ENCODE measurements at regions of chr22 and their contacts with region 1.

Region 1: GRCh38 chr22:43273902-43274484 is 69.2 kb downstream of the SCUBE1 start:
- DNase-seq: peak; percentile 61 to 69
- ATAC-seq: peak; percentile 65 to 87; a peak in 5 of 6 replicates
- H3K4me3 ChIP-seq: no peak overlapping the region
- H3K27ac ChIP-seq: no peak overlapping the region
- H3K4me1 ChIP-seq: no peaks in the 10 kb centered on the region
- CTCF ChIP-seq: peak; percentile 60
- EP300 ChIP-seq: no peak
- POLR2A ChIP-seq: no peak
- RAD21 ChIP-seq: peak; percentile 80 to 89

Region 2: DNA sequence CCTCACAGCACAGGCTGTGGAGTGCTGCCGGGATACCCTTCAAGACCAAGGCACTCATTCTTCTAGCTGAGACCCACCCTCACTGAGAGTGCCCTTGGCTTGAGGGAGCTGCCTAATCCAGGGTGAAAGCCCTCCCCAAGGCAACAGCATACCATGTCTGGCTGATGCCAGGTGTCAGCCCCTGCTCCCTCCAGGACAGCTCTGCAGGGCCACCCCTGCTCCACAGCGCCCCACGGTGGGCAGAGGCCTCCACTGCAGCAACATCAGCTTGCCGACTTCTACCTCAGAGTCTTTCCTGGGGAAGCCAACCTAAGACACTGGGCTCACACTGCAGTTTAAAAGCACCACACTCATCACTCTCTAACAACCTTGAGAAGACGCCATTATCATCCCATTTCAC is 213.8 kb before region 1 on chr22:
- CTCF ChIA-PET with region 1: no interaction called
- POLR2A ChIA-PET with region 1: no interaction called
- DNase-seq: peak in 1 of 2 experiments; percentile 33
- ATAC-seq: peak; percentile 43 to 77; a peak in 4 of 6 replicates
- H3K4me3 ChIP-seq: no peak overlapping the region
- H3K27ac ChIP-seq: no peak overlapping the region
- H3K4me1 ChIP-seq: no peaks in the 10 kb centered on the region
- CTCF ChIP-seq: peak; percentile 31; the same call in 1 of the 3 replicates
- EP300 ChIP-seq: no peak
- POLR2A ChIP-seq: no peak
- RAD21 ChIP-seq: peak; percentile 32 to 54; a peak in 2 of 5 replicates

Region 3: DNA sequence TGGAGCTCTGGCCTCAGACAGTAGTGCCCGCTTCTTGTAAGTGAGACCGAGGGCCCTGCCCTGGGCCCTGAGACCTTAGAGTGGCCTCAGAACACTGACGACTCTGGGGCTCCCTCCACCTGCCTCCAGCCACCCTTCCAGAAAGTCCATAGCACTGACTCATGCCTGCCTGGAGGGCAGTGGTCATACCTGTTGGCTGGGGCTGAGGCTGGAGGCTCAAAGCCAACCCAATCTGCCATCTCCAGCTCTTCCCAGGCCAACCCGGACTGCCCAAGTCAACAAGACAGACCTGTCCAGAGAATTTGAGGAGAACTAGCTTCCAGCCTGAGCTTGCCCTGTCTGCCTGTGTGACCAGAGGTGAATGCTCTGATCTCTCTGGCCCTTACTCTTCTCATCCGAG is 20.2 kb before region 1 on chr22:
- CTCF ChIA-PET with region 1: interaction called, 32 read pairs
- POLR2A ChIA-PET with region 1: no interaction called
- DNase-seq: no peak
- ATAC-seq: no peak
- H3K4me3 ChIP-seq: no peak overlapping the region
- H3K27ac ChIP-seq: no peak overlapping the region
- H3K4me1 ChIP-seq: no peaks in the 10 kb centered on the region
- CTCF ChIP-seq: no peak
- EP300 ChIP-seq: no peak
- POLR2A ChIP-seq: no peak
- RAD21 ChIP-seq: no peak

Region 4: GRCh38 chr22:43293655-43294392 is 19.8 kb after region 1 on chr22:
- CTCF ChIA-PET with region 1: interaction called, 18 read pairs
- POLR2A ChIA-PET with region 1: no interaction called
- DNase-seq: peak; percentile 32 to 73
- ATAC-seq: peak; percentile 48 to 82; a peak in 5 of 6 replicates
- H3K4me3 ChIP-seq: no peak overlapping the region
- H3K27ac ChIP-seq: peak overlapping the region; percentile 45 to 52; a peak in 4 of 6 replicates
- H3K4me1 ChIP-seq: peaks cover 15% of the 10 kb centered on the region
- CTCF ChIP-seq: no peak
- EP300 ChIP-seq: no peak
- POLR2A ChIP-seq: no peak
- RAD21 ChIP-seq: no peak

Region 5: DNA sequence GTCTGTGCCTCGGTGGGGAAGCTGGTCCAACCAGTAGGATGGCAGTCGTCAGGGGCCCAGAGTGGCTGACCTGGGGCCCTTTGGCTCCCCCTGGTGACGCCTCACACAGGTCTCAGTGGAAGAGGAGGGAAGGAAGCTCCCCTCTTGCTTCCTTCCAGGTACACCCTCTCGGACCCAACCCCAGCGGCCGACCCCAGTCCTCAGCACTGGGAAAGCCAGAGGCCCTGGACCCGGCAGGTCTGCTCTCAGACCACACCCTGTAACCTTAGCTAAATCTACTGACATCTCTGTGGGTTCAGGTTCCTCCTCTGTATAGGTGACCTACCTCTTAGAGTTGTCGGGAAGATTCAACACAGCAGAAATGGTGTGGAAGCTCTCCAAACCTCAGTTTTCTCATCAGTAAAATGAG is 72.5 kb after region 1 on chr22:
- CTCF ChIA-PET with region 1: interaction called, 84 read pairs
- POLR2A ChIA-PET with region 1: no interaction called
- DNase-seq: peak; percentile 37 to 65
- ATAC-seq: peak; percentile 59 to 87; a peak in 4 of 6 replicates
- H3K4me3 ChIP-seq: no peak overlapping the region
- H3K27ac ChIP-seq: no peak overlapping the region
- H3K4me1 ChIP-seq: peaks cover 11% of the 10 kb centered on the region
- CTCF ChIP-seq: peak; percentile 48
- EP300 ChIP-seq: no peak
- POLR2A ChIP-seq: no peak
- RAD21 ChIP-seq: peak; percentile 51 to 65; a peak in 4 of 5 replicates

Region 6: DNA sequence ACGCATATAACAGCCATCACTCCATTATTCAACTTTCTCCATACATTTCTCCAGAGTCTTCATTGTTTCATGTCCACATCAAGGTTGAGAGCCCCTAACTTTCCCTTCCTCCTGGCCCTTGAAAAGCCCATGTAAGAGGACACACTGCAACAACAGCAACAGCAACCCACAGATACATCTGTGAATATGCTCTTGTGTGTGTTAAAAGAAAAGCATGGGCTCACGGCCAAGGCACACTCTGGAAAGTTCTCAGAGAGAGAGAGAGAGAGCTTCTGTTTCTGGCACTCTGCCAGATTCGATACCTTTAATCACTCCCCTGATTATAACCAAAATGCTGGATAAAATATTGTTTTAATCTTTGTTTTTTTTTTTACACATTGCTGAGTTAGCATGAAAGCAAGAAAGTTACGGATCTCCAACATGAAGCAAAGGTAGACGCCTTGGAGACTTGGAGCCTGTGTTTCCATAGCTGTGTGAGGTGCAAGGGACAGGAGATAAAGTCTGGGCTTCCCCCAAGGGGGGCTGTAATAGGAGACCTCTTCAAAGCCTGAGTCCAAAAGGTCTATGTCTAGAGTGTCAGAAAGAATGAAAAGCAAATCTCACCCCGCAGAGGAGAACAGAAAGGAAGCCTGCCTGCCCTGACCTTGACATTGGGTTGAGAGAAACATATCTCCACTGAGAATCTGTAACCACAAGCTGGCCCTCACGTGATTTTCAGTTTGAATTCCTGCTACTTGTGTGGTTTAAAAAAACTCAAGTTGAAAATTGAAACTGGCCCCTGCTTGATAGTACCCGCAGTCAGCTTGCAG is 104.1 kb after region 1 on chr22:
- CTCF ChIA-PET with region 1: interaction called, 134 read pairs
- POLR2A ChIA-PET with region 1: no interaction called
- DNase-seq: no peak
- ATAC-seq: no peak
- H3K4me3 ChIP-seq: no peak overlapping the region
- H3K27ac ChIP-seq: no peak overlapping the region
- H3K4me1 ChIP-seq: no peaks in the 10 kb centered on the region
- CTCF ChIP-seq: no peak
- EP300 ChIP-seq: no peak
- POLR2A ChIP-seq: no peak
- RAD21 ChIP-seq: no peak

Region 7: GRCh38 chr22:43826142-43827002 is 552.4 kb after region 1 on chr22:
- CTCF ChIA-PET with region 1: interaction called, 16 read pairs
- POLR2A ChIA-PET with region 1: no interaction called
- DNase-seq: peak; percentile 33 to 46
- ATAC-seq: peak; percentile 72 to 78
- H3K4me3 ChIP-seq: no peak overlapping the region
- H3K27ac ChIP-seq: peak overlapping the region in 1 of 2 experiments; percentile 68; a peak in 3 of 6 replicates
- H3K4me1 ChIP-seq: peaks cover 28% of the 10 kb centered on the region
- CTCF ChIP-seq: peak; percentile 58
- EP300 ChIP-seq: no peak
- POLR2A ChIP-seq: no peak
- RAD21 ChIP-seq: peak; percentile 76 to 77

Measured in A549 (cell line).